Thyroid gland (tissue), 4 donors: ENCODE measurements at regions of chr1 and their contacts with region 1.

Region 1: DNA sequence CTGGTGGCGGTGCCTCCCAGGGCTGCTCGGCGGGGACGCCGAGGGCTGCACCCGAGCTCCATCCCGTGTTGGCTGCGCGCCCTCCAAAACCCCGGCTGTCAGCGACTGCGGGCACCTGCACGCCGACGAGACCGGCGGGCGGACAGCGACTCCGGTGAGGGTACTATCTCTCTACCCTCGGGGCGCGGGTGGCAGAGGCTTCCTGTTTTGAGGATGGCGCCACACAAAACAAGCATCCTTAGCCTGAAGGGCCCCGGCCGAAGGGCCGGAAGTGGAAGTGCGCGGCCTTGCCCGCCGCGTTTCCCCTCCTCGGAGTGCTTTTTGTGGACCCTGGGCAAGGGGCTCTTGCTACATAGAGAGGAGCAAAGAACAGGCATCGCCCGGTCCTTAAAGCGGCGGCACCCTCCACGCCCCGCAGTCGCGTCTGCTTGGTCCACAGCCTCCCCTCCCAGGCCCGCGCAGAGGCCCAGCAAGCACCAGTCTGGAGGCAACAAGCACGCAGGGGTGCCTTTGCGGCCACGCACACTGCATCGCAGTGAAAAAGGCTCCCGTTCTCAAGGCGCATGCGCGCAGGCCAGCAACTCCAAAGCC is 561 bp upstream of the COQ8A start:
- DNase-seq: peak; percentile 66 to 69
- H3K4me3 ChIP-seq: peak overlapping the region in 2 of 3 donors; percentile 59 to 62
- H3K27ac ChIP-seq: peak overlapping the region; percentile 95 to 98 (median 96)
- H3K4me1 ChIP-seq: peaks cover 13 to 33% of the 10 kb centered on the region in 2 donors
- H3K27me3 ChIP-seq: no peaks in the 10 kb centered on the region
- CTCF ChIP-seq: no peak
- POLR2A ChIP-seq: peak; percentile 96 to 98

Region 2: DNA sequence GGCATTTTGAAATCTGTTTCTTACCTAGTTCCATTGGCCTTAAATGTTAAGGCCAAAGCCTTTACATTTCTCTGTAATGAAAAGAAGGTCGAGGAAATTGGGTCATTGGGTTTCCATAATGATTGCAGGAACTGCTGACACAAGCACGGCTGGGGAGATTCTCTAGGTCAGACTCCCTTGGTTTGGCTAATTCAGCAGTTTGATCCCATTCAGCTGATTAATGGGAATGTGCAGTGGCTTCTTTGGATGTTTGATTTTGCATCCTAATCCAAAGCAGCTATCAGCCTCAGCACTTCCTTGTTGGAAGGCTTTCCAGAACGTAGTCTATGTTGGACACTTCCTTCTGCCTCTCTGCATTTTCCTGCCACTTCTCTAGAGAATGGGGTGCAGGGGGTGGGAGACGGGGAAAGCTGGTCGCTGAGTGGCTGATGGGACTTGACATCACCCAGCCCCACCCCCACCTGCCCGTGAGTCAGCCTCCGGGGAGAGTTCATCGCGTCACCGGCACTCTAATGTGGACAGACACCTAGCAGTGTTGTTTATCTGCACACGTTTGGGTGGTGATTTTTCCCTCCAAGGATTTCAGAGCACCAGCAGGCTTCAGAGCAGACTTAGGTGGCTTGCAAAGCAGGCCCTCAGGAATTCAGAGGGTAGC is 63.8 kb before region 1 on chr1:
- intact Hi-C with region 1: loop called (anchors 5 kb)
- DNase-seq: peak in 1 of 2 donors; percentile 12
- H3K4me3 ChIP-seq: no peak overlapping the region
- H3K27ac ChIP-seq: no peak overlapping the region
- H3K4me1 ChIP-seq: peaks cover 10 to 11% of the 10 kb centered on the region in 2 donors
- H3K27me3 ChIP-seq: no peaks in the 10 kb centered on the region
- CTCF ChIP-seq: no peak
- POLR2A ChIP-seq: no peak